Spleen (tissue), 13 donors: ENCODE measurements at regions of chr19 and their contacts with region 1.

Region 1: DNA sequence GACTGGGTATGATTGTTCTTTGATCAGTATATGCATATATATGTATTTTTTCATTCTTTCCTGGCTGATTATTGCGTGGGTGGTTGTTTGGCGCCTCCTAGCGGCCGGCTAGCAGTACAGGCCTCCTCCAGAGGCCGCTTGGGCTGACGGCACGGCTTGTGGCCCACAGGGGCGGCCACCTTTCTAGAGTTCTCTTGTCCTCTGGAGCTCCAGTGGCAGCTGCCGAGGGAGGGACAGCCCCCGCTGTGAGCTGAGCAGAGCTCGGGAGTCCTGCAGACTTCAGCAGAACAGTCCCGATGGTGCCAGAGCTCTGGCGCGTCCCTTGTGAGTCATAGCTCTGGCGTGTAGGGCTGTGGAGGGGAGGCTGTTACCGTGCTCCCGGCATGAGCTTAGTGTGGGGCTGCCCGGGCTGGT is 22.5 kb upstream of the ZNF429 start:
- DNase-seq: peak; percentile 88
- H3K4me3 ChIP-seq: peak overlapping the region in 2 of 8 donors; percentile 22 to 24
- H3K27ac ChIP-seq: peak overlapping the region in 1 of 8 donors; percentile 28
- H3K4me1 ChIP-seq: no peaks in the 10 kb centered on the region
- H3K27me3 ChIP-seq: no peaks in the 10 kb centered on the region
- CTCF ChIP-seq: peak; percentile 15 to 90 (median 78)
- POLR2A ChIP-seq: no peak

Region 2: GRCh38 chr19:21410166-21410565 is 72.7 kb before region 1 on chr19:
- intact Hi-C with region 1: no loop called
- DNase-seq: no peak
- H3K4me3 ChIP-seq: no peak overlapping the region
- H3K27ac ChIP-seq: no peak overlapping the region
- H3K4me1 ChIP-seq: no peaks in the 10 kb centered on the region
- H3K27me3 ChIP-seq: no peaks in the 10 kb centered on the region
- CTCF ChIP-seq: no peak
- POLR2A ChIP-seq: no peak

Region 3: DNA sequence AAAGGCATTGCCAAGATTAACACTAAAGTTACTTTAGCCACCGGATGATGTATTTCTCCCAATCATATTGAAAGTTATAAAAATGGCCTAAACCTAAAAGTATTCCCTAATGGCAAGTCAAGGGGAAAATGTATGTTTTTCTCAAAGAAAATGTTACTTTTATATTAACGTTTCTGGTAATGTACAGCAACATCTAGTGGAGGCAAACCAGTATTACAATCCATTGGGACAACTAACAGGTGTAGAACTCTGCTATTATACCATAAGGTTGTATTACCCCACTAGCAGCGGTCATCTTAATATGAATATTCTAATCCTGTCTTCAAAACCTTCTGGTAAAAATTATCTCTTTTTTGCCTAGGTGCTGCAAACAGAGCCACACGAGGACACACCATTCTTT is 215.3 kb after region 1 on chr19:
- intact Hi-C with region 1: loop called (anchors 5 kb)
- DNase-seq: no peak
- H3K4me3 ChIP-seq: no peak overlapping the region
- H3K27ac ChIP-seq: no peak overlapping the region
- H3K4me1 ChIP-seq: no peaks in the 10 kb centered on the region
- H3K27me3 ChIP-seq: no peaks in the 10 kb centered on the region
- CTCF ChIP-seq: peak; percentile 7 to 76 (median 64)
- POLR2A ChIP-seq: no peak